Right ventricle myocardium superior (tissue), 1 donor: ENCODE measurements at regions of chr4 and their contacts with region 1.

Region 1: DNA sequence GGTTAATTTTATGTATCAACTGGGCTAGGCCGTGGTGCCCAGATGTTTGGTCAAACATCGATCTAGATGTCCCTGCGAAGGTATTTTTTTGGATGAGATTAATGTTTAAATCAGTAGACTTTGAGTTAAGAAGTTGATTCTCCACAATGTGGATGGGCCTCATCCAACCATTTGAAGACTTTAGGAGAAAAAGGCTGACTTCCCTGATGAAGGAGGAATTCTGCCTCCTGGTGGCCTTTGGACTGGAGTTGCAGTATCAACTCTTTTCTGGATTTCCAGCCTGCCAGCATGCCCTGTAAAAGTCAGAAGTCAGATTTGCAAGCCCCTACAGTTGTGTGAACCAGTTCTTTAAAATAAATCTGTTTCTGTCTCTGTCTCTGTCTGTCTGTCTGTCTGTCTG is 91.4 kb downstream of the STK32B start:
- DNase-seq: no peak
- ATAC-seq: no peak

Region 2: DNA sequence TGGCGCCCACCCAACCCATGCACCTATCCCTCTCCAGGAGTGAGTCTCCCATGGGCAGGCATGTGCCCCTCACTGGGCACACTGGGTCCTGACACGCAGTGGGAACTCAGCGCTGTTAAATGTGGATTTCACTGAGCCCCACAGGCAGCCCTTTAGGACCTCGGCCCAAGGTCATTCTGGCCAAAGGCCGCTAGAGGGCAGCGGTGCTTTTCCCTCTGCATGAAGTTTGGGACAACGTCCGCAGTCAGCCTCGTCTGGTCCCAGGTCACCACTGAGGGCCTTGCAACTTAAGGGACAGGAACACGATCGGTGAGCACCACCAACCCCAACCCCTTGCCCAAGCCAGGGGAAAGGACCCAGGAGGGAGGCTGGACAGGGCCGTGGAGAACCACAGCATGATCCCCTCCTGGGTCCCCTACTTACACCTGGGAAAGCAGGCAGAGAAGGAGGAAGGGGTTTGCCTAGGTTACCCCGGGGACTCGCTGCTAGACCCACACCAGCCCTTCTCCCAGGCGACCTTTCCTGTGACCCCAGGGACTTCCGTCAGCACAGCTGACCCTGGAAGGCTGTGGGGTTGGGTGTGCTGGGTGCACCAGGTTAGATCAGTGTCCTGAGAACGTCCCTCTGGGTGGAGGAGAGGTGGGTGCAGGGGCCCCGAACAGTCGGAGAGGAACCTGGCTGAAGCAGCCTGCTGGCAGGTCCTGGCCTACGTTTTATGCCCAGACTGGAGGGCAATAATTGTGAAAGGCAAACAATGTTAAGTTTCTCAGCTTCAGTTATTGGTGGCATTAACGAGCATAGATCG is 147.4 kb before region 1 on chr4:
- intact Hi-C with region 1: loop called (anchors 10 kb)
- DNase-seq: peak; percentile 85
- ATAC-seq: peak; percentile 78